ENCODE measurements at regions of chr20 and their contacts with region 1.

Region 1: DNA sequence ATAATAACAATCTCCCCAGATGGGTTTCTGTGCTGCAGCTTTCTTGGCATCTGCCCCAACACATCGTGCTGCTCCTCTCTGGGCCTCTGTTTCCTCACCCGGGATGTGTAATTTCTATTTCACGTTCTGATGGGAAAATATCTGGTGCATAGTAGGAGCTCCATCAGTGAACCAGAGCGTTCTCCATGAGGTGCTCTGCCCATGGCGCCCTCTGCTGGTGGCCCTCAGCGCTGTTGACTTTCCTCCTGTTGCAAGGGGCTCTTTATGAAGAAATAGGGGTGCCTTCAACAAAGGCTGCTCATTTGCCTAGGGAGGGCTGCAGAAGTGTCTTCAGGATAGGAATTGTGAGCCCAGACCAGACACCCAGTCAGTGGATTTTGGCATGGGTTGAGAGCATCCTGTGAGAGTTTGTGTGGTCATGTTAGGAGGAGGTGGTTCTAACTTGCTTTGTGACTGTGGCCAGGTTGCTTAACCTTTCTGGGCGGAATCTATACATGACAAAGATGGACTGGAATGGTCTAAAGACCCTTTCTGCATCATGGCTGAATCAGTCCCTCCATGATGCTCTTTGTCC is 8.1 kb downstream of the SCRT2 start:
- DNase-seq: peak; percentile 48
- ATAC-seq: peak; percentile 55
- H3K4me3 ChIP-seq: no peak overlapping the region
- H3K27ac ChIP-seq: no peak overlapping the region
- H3K4me1 ChIP-seq: peaks cover 6% of the 10 kb centered on the region
- H3K27me3 ChIP-seq: peaks cover 13 to 64% of the 10 kb centered on the region in 2 experiments; a peak in 4 of 5 replicates
- CTCF ChIP-seq: peak; percentile 89
- EP300 ChIP-seq: no peak
- POLR2A ChIP-seq: no peak
- RAD21 ChIP-seq: peak; percentile 79

Region 2: DNA sequence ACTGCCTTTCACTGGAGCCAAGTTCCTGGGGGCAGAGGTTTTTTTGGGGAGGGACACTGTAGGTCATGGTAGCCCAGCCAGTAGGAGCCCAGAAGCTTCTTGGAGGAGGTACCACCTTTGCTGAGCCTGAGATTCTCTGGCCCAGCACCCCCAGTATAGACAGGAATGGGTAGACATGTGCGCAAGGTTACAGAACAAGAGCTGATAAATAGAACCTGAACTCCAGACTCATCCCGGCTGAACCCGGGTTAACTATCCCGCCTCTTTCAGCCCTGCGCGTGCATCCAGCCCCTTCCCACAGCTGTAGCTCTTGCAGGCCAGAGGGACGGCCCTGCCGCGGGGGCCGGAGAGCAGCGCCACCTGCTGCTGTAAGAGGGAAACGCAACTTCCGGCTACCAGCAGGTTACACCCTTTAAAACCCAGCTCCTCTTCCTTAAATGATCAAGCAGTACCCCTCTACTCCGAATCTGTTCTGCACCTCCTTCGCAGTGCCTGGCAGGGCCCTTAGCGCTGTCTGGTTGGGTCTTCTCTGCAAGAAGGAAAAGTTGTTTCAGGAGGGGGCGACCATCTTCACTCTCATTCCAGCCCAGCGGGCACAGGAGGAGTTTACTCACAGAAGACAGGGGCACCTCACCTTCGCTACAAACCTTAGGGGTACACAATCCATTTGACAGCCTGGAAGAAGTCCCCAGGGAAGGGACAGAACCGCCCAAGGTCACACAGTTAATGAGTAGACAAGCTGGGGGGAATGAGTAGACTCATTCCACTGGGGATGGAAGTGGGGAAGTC is 22.0 kb before region 1 on chr20:
- CTCF ChIA-PET with region 1: interaction called, 12 read pairs
- POLR2A ChIA-PET with region 1: interaction called, 5 read pairs
- in situ Hi-C with region 1: no loop called
- intact Hi-C with region 1: no loop called
- DNase-seq: peak; percentile 90
- ATAC-seq: peak; percentile 78
- H3K4me3 ChIP-seq: peak overlapping the region; percentile 15 to 71 (median 58)
- H3K27ac ChIP-seq: peak overlapping the region; percentile 86
- H3K4me1 ChIP-seq: peaks cover 49% of the 10 kb centered on the region
- H3K27me3 ChIP-seq: no peaks in the 10 kb centered on the region
- CTCF ChIP-seq: peak; percentile 100
- EP300 ChIP-seq: peak; percentile 32 to 53; a peak in 2 of 4 replicates
- POLR2A ChIP-seq: peak; percentile 43 to 53; a peak in 2 of 4 replicates
- RAD21 ChIP-seq: peak; percentile 99

Region 3: GRCh38 chr20:653110-653589 is 14.3 kb before region 1 on chr20 and contains the start of gene SRXN1:
- CTCF ChIA-PET with region 1: interaction called, 14 read pairs
- POLR2A ChIA-PET with region 1: no interaction called
- in situ Hi-C with region 1: no loop called
- intact Hi-C with region 1: no loop called
- DNase-seq: peak; percentile 92
- ATAC-seq: peak; percentile 87
- H3K4me3 ChIP-seq: peak within 1 kb of the TSS; percentile 67 to 96 (median 93)
- H3K27ac ChIP-seq: peak within 1 kb of the TSS; percentile 75
- H3K4me1 ChIP-seq: peaks cover 37% of the 10 kb centered on the region
- H3K27me3 ChIP-seq: peaks cover 4 to 30% of the 10 kb centered on the region in 2 experiments; a peak in 2 of 5 replicates
- CTCF ChIP-seq: peak; percentile 91
- EP300 ChIP-seq: peak; percentile 14 to 74; a peak in 3 of 4 replicates
- POLR2A ChIP-seq: peak in 1 of 2 experiments; percentile 62; a peak in 1 of 4 replicates
- RAD21 ChIP-seq: peak; percentile 97
- total RNA-seq, gene SRXN1: 87.7 and 98.2 TPM in 2 replicates